ENCODE measurements at regions of chr12 and their contacts with region 1.

Region 1: GRCh38 chr12:46523863-46524770 is 151.5 kb upstream of the SLC38A2 start:
- DNase-seq: no peak

Region 2: GRCh38 chr12:46473634-46474329 is 50.3 kb before region 1 on chr12:
- intact Hi-C with region 1: loop called (anchors 5 kb)
- DNase-seq: peak; percentile 83

Region 3: GRCh38 chr12:46487567-46488131 is 36.5 kb before region 1 on chr12:
- intact Hi-C with region 1: loop called (anchors 5 kb)
- DNase-seq: no peak

Region 4: GRCh38 chr12:46573347-46573658 is 49.2 kb after region 1 on chr12:
- intact Hi-C with region 1: no loop called
- DNase-seq: no peak

Region 5: DNA sequence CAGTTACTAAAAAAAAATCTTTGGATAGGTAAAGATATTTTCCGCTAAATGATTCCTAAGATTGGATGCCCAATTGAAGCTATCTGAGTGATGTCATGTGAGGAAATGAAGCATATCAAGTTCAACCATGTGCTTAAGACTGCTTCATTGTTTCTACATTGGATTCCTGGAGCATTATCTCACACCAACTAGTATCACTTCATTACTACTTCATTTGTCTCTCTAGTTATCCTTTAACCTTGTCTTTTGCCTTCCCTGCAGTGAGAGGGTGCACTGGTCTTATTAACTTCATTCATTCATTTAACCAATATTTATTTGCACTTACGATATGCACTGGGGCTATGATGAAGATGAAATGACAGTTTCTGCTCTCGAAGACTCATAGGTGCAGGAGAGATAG is 103.6 kb after region 1 on chr12:
- intact Hi-C with region 1: no loop called
- DNase-seq: no peak

Region 6: DNA sequence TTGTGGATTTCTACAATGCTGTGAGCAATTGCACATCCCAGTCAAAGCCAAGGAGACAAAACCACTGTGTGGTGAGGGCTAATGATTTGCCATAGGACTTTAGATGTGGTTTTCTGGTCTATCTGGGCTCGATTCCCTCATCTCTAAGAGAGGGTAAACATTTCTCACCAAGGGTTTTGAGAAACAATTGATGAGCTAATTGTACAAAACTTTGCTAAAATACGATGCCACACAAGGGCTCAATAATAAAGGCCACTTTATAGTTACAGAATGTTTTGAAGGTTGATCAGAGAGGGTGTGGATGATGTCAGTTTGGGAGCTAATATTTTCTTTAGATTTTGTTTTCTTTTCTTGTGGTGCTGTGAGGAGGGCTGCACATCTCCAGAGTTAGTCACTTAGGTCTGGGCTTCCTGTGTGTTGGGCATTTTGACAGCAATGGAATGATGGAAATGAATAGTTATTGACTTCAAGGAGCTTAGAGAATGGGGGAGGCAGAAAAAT is 362.5 kb after region 1 on chr12:
- intact Hi-C with region 1: no loop called
- DNase-seq: no peak